Body of pancreas (tissue), 4 donors: ENCODE measurements at regions of chr9 and their contacts with region 1.

Region 1: GRCh38 chr9:2872257-2872935 is 28.5 kb upstream of the PUM3 start:
- DNase-seq: peak in 2 of 4 donors; percentile 7 to 8
- ATAC-seq: no peak
- H3K4me3 ChIP-seq: no peak overlapping the region
- H3K27ac ChIP-seq: no peak overlapping the region
- H3K4me1 ChIP-seq: no peaks in the 10 kb centered on the region
- H3K27me3 ChIP-seq: no peaks in the 10 kb centered on the region
- CTCF ChIP-seq: peak in 6 of 7 experiments; percentile 9 to 58 (median 36)
- POLR2A ChIP-seq: no peak

Region 2: DNA sequence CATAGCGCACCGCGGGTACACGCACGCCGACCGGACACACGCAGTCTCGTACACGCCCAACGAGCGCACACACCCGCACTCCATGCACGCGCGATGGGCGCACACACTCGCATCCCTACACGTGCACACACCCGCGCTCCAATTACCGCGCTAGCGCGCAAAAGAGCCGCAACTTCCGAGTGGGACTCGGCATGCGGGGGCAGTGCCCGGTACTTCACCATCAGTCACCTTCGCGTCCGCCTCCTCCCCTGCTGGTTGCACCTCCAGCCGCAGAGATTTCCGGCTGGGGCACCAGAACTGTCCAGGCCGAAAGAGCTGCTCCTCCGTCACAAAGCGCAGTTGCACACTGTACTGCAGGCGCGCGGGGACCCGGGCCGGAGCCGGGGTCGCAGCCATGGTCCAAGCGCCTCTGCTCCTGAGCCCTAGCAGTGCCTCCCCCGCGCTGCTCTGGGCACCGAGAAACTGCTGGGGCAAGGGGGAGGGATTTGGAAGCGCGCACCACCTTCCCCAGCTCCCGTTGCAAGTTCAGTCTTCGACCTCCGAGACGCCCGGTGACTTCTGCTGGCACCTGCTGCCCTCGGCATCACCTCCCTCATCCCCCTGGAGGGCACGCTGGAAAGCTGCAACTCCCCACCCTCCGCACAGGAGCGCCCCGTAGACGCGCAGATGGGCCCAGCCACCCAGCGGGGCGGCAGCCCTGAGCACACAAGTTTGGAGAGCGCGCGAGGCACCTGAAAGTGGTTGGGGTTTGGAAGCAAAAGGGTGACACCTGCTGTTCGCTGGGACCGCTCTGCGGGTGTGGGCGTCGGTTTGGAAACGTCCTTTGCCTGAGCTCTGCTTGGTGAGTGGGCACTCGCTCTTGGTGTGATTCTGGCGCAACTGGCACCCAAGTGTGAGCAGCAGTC is 308.9 kb after region 1 on chr9:
- intact Hi-C with region 1: loop called (anchors 10 kb)
- DNase-seq: peak; percentile 51 to 67 (median 60)
- ATAC-seq: peak; percentile 60
- H3K4me3 ChIP-seq: no peak overlapping the region
- H3K27ac ChIP-seq: no peak overlapping the region
- H3K4me1 ChIP-seq: peaks cover 18% of the 10 kb centered on the region
- H3K27me3 ChIP-seq: no peaks in the 10 kb centered on the region
- CTCF ChIP-seq: peak; percentile 19 to 63 (median 48)
- POLR2A ChIP-seq: no peak

Region 3: GRCh38 chr9:3367185-3367584 is 494.8 kb after region 1 on chr9:
- intact Hi-C with region 1: no loop called
- DNase-seq: no peak
- ATAC-seq: no peak
- H3K4me3 ChIP-seq: no peak overlapping the region
- H3K27ac ChIP-seq: no peak overlapping the region
- H3K4me1 ChIP-seq: peaks cover 6% of the 10 kb centered on the region
- H3K27me3 ChIP-seq: no peaks in the 10 kb centered on the region
- CTCF ChIP-seq: no peak
- POLR2A ChIP-seq: no peak